Common myeloid progenitor, CD34-positive (primary cell): ENCODE measurements at regions of chr4 and their contacts with region 1.

Region 1: GRCh38 chr4:123102897-123103471 is 180.6 kb upstream of the NUDT6 start:
- DNase-seq: peak; percentile 53 to 78 (median 72)
- H3K4me3 ChIP-seq: no peak overlapping the region
- H3K27ac ChIP-seq: no peak overlapping the region
- H3K4me1 ChIP-seq: peaks cover 0 to 16% (median 1%) of the 10 kb centered on the region in 4 experiments
- H3K27me3 ChIP-seq: no peaks in the 10 kb centered on the region

Region 2: GRCh38 chr4:123092586-123092985 is 10.4 kb before region 1 on chr4:
- CTCF ChIA-PET with region 1: interaction called, 13 read pairs
- POLR2A ChIA-PET with region 1: no interaction called
- DNase-seq: no peak
- H3K4me3 ChIP-seq: no peak overlapping the region
- H3K27ac ChIP-seq: no peak overlapping the region
- H3K4me1 ChIP-seq: peaks cover 0 to 7% (median 0%) of the 10 kb centered on the region in 4 experiments
- H3K27me3 ChIP-seq: no peaks in the 10 kb centered on the region

Region 3: DNA sequence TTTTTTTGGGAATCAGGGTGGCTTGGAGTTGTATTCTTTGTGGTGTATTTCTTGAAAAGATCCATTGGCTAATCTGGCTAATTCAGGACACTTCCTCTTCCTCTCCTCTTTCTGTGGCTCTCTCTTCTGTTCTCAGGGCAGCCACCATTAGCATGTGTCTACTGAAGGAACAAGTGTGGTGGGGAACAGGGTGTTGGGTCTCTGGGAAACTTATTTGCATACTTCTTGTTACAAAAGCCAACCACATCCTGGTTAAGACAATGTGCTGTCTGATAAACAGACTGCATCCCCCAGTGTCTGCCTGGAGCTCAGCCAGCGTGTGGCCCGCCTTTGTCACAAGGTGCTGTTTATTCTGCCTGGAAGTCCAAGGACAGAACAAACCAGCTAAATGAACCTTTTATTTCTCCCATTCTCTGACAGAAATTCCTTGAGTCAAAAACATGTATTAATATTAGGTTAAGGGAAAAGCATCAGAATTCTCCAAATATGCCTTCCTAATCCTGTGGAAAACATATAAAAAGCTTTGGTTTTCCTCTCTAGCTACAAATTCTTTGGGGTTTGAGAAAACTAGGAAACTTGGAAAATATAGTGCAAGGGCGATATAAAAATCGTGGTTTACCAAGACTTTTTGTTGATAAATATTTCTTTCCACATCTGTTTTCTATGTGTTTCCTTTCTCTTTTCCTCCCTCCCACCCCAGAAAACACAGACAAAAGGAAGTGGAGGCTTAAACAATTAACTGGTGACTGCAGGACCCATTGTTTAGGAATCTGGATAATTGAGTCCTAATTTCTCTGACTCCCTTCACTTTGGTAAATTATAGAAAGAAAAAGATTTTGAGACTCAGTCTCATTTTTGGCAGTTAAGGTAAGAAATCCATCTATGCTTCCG is 497.2 kb after region 1 on chr4:
- CTCF ChIA-PET with region 1: no interaction called
- POLR2A ChIA-PET with region 1: no interaction called
- DNase-seq: peak; percentile 97 to 100 (median 99)
- H3K4me3 ChIP-seq: peak overlapping the region in 3 of 7 experiments; percentile 8 to 38 (median 35)
- H3K27ac ChIP-seq: peak overlapping the region in 1 of 2 experiments; percentile 77
- H3K4me1 ChIP-seq: peaks cover 27 to 51% (median 39%) of the 10 kb centered on the region in 4 experiments
- H3K27me3 ChIP-seq: no peaks in the 10 kb centered on the region